Endothelial cell of umbilical vein (primary cell): ENCODE measurements at regions of chr19 and their contacts with region 1.

Region 1: GRCh38 chr19:11924886-11925650 is at the start of gene ZNF700:
- DNase-seq: peak; percentile 91
- H3K4me3 ChIP-seq: peak within 1 kb of the TSS; percentile 59 to 90 (median 81)
- H3K27ac ChIP-seq: peak within 1 kb of the TSS; percentile 64
- H3K4me1 ChIP-seq: peaks cover 15% of the 10 kb centered on the region
- H3K27me3 ChIP-seq: no peaks in the 10 kb centered on the region
- CTCF ChIP-seq: no peak
- POLR2A ChIP-seq: peak; percentile 87
- total RNA-seq, gene ZNF700: 6.9 and 7.9 TPM in 2 replicates

Region 2: GRCh38 chr19:11766597-11767591 is 158.2 kb before region 1 on chr19 and contains the start of gene ZNF441:
- CTCF ChIA-PET with region 1: interaction called, 3 read pairs
- POLR2A ChIA-PET with region 1: no interaction called
- dilution Hi-C with region 1: no loop called
- intact Hi-C with region 1: loop called (anchors 1 kb)
- DNase-seq: peak; percentile 95
- H3K4me3 ChIP-seq: peak within 1 kb of the TSS; percentile 46 to 88 (median 71)
- H3K27ac ChIP-seq: peak within 1 kb of the TSS; percentile 65
- H3K4me1 ChIP-seq: peaks cover 6% of the 10 kb centered on the region
- H3K27me3 ChIP-seq: no peaks in the 10 kb centered on the region
- CTCF ChIP-seq: no peak
- POLR2A ChIP-seq: peak; percentile 69
- total RNA-seq, gene ZNF441: 2.4 and 4.5 TPM in 2 replicates

Region 3: GRCh38 chr19:11949201-11949600 is 24.1 kb after region 1 on chr19:
- CTCF ChIA-PET with region 1: no interaction called
- POLR2A ChIA-PET with region 1: no interaction called
- dilution Hi-C with region 1: no loop called
- intact Hi-C with region 1: no loop called
- DNase-seq: no peak
- H3K4me3 ChIP-seq: no peak overlapping the region
- H3K27ac ChIP-seq: no peak overlapping the region
- H3K4me1 ChIP-seq: no peaks in the 10 kb centered on the region
- H3K27me3 ChIP-seq: no peaks in the 10 kb centered on the region
- CTCF ChIP-seq: no peak
- POLR2A ChIP-seq: no peak

Region 4: DNA sequence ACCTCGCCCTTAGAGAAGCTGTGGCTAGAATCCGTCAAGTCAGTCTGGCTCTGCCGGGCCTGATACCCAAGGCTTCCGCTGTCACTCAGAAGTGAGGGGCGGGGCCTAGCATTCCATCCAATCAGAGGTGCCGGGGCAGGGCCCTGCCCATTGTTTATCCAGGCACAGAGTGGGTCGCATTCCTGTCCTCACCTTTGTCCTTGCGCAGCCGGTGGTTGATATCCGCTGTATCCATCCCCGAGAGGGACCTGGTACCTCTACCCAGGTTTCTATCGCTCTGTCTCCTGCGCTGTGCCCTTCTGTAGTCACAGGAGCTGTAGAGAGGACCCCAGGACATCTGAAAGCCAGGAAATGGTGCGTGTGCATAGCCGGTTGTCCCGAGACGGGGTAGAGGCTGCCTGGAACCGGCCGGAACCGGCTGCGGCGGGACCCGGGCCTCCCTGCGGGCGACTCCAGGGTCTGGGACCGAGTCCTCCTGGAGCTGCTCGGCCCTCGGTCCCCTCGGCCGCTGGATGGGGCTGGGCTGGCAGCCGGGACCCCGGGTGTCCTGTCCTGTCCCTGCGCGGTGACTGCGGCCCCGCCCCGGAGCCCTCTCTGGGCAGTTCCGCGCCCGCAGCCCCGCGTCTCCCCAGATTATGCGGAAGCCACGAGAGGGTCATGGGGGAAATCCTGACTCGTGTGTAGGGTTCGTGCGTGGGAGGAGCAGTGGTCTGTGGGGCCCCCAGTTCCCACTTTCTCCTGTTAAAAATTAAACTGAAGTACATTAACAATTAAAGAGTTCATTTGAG is 40.0 kb after region 1 on chr19 and contains the start of gene ZNF763:
- CTCF ChIA-PET with region 1: interaction called, 20 read pairs
- POLR2A ChIA-PET with region 1: no interaction called
- dilution Hi-C with region 1: no loop called
- intact Hi-C with region 1: no loop called
- DNase-seq: peak; percentile 48
- H3K4me3 ChIP-seq: peak within 1 kb of the TSS; percentile 24 to 66 (median 51)
- H3K27ac ChIP-seq: no peak within 1 kb of the TSS
- H3K4me1 ChIP-seq: no peaks in the 10 kb centered on the region
- H3K27me3 ChIP-seq: no peaks in the 10 kb centered on the region
- CTCF ChIP-seq: no peak
- POLR2A ChIP-seq: no peak
- total RNA-seq, gene ZNF763: 0.48 and 0.77 TPM in 2 replicates

Region 5: DNA sequence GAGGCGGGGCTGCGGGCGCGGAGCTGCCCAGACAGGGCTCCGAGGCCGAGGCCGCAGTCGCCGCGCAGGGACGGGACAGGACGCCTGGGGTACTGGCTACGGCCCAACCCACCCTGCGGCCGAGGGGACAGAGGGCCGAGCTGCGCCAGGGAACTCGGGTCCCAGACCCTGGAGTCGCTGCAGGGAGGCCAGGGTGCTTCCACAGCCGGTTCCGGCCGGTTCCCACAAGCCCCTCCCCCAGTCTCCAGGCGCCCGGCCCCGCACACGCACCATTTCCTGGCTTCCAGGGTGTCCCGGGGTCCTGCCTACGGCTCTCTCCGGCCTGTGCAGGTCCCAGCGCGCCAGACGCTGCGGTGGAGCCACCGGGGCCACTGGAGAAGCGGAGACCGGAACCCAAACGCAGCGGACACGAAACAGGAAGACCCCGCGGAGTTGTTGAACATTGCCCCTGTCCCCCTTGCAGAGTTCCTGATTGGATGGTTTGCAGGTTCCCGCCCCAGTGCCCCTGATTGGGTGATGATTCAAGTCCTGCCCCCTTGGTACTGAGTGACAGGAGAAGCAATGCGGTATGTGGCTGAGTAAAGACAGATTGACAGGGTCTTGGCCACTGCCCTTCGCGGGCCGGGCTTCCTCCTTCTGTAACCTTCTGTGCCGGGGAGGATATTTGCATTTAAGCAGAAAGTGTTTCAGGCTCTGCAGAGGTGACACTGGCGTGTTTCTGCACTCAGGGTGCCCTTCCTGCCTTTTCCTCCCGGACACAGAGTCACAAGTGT is 626.2 kb after region 1 on chr19 and contains the start of gene ZNF564:
- CTCF ChIA-PET with region 1: interaction called, 3 read pairs
- POLR2A ChIA-PET with region 1: no interaction called
- dilution Hi-C with region 1: no loop called
- intact Hi-C with region 1: loop called (anchors 2 kb)
- DNase-seq: peak; percentile 98
- H3K4me3 ChIP-seq: peak within 1 kb of the TSS; percentile 10 to 64 (median 62)
- H3K27ac ChIP-seq: peak within 1 kb of the TSS; percentile 73
- H3K4me1 ChIP-seq: no peaks in the 10 kb centered on the region
- H3K27me3 ChIP-seq: no peaks in the 10 kb centered on the region
- CTCF ChIP-seq: no peak
- POLR2A ChIP-seq: peak; percentile 71
- total RNA-seq, gene ZNF564: 6.5 and 7.1 TPM in 2 replicates

Region 6: GRCh38 chr19:12672744-12673143 is 747.7 kb after region 1 on chr19:
- CTCF ChIA-PET with region 1: interaction called, 21 read pairs
- POLR2A ChIA-PET with region 1: interaction called, 3 read pairs
- dilution Hi-C with region 1: no loop called
- intact Hi-C with region 1: loop called (anchors 5 kb)
- DNase-seq: no peak
- H3K4me3 ChIP-seq: no peak overlapping the region
- H3K27ac ChIP-seq: no peak overlapping the region
- H3K4me1 ChIP-seq: peaks cover 15% of the 10 kb centered on the region
- H3K27me3 ChIP-seq: no peaks in the 10 kb centered on the region
- CTCF ChIP-seq: no peak
- POLR2A ChIP-seq: no peak